CD4-positive, alpha-beta T cell (primary cell): ENCODE measurements at regions of chr4 and their contacts with region 1.

Region 1: GRCh38 chr4:1200425-1201035 is 28.1 kb upstream of the SPON2 start:
- DNase-seq: peak in 4 of 14 experiments; percentile 32 to 58 (median 37)
- ATAC-seq: no peak
- H3K4me3 ChIP-seq: peak overlapping the region; percentile 66
- H3K4me3 Mint-ChIP-seq: peak overlapping the region; percentile 83
- H3K27ac ChIP-seq: peak overlapping the region; percentile 71 to 80
- H3K27ac Mint-ChIP-seq: peak overlapping the region; percentile 97
- H3K4me1 ChIP-seq: peaks cover 65% of the 10 kb centered on the region
- H3K4me1 Mint-ChIP-seq: peaks cover 30% of the 10 kb centered on the region
- H3K27me3 ChIP-seq: no peaks in the 10 kb centered on the region
- H3K27me3 Mint-ChIP-seq: no peaks in the 10 kb centered on the region
- CTCF ChIP-seq: no peak

Region 2: DNA sequence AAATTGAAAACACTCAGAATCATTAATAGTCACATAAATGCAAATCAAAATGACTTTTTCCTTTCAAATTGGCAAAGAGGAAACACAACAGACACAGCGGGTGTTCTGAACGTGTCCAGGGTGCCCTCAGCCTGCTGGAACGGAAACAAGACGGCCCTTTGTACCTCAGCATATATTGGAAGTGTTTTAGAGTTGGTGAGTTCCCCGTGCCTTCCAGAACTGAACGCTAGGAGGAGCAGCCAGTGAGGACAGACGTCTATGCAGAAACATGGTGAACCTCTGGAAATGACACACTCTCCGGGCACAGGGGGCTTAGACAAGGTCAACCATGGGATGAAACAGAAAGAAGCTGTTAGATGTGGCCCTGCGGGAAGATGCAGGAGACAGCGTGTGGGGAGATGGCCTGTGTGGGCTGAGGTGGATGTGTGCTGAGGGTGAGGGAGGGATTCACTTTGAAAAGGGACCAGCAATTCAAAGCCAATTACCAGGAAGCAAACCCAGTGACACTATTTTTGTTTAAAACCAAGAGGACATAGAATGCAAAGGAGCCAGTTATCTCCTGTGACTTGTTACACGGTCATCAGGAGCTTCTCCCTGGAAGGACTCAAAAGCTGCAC is 127.6 kb before region 1 on chr4:
- CTCF ChIA-PET with region 1: no interaction called
- POLR2A ChIA-PET with region 1: no interaction called
- intact Hi-C with region 1: no loop called
- DNase-seq: peak; percentile 18 to 73 (median 46)
- ATAC-seq: peak; percentile 98
- H3K4me3 ChIP-seq: no peak overlapping the region
- H3K4me3 Mint-ChIP-seq: no peak overlapping the region
- H3K27ac ChIP-seq: no peak overlapping the region
- H3K27ac Mint-ChIP-seq: no peak overlapping the region
- H3K4me1 ChIP-seq: peaks cover 5% of the 10 kb centered on the region
- H3K4me1 Mint-ChIP-seq: peaks cover 13% of the 10 kb centered on the region
- H3K27me3 ChIP-seq: no peaks in the 10 kb centered on the region
- H3K27me3 Mint-ChIP-seq: peaks cover 5% of the 10 kb centered on the region
- CTCF ChIP-seq: peak; percentile 71

Region 3: GRCh38 chr4:1167247-1167949 is 33.1 kb before region 1 on chr4:
- CTCF ChIA-PET with region 1: interaction called, 15 read pairs
- POLR2A ChIA-PET with region 1: interaction called, 26 read pairs
- intact Hi-C with region 1: loop called (anchors 1 kb)
- DNase-seq: peak; percentile 69 to 96 (median 84)
- ATAC-seq: peak; percentile 87
- H3K4me3 ChIP-seq: peak overlapping the region; percentile 79
- H3K4me3 Mint-ChIP-seq: peak overlapping the region; percentile 90
- H3K27ac ChIP-seq: no peak overlapping the region
- H3K27ac Mint-ChIP-seq: peak overlapping the region; percentile 67
- H3K4me1 ChIP-seq: peaks cover 40% of the 10 kb centered on the region
- H3K4me1 Mint-ChIP-seq: peaks cover 25% of the 10 kb centered on the region
- H3K27me3 ChIP-seq: peaks cover 19 to 21% of the 10 kb centered on the region in 2 experiments
- H3K27me3 Mint-ChIP-seq: peaks cover 16% of the 10 kb centered on the region
- CTCF ChIP-seq: peak; percentile 97